ENCODE measurements at regions of chr15 and their contacts with region 1.

Region 1: DNA sequence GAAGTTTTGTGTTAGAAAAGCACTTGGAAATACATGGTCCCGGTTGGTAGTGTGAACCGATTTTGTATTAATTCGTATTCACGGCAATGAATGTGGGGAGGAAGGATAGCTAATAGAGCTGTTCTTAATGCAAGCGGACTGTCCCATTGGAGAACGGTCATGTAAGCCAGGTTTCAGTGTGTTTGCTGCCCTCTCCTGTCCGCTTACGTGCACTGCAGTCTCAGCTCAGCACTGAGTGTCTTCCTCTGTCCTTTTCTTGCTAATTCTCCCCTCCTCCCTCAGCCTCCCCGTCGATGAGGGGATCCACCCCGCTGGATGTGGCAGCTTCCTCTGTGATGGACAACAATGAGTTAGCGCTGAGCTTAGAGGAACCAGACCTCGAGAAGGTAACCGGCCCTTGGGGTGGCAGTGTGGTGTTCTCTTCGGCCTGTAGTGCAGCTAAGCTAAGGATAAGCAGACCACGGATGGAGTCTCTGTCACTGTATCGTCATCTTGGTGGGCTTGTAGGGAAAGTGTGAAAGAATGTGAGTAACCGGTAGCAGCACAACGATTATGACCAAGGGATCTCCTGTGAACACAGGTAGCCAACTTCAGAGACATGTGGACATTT is 267.5 kb upstream of the CHRM5 start:
- DNase-seq: peak; percentile 65 to 89
- H3K4me3 ChIP-seq: no peak overlapping the region
- H3K27ac ChIP-seq: no peak overlapping the region
- H3K4me1 ChIP-seq: peaks cover 0 to 4% (median 0%) of the 10 kb centered on the region in 4 experiments; a peak in 4 of 7 replicates
- H3K27me3 ChIP-seq: no peaks in the 10 kb centered on the region
- CTCF ChIP-seq: peak; percentile 86 to 100 (median 98)
- EP300 ChIP-seq: no peak
- POLR2A ChIP-seq: no peak
- RAD21 ChIP-seq: peak; percentile 94 to 98

Region 2: DNA sequence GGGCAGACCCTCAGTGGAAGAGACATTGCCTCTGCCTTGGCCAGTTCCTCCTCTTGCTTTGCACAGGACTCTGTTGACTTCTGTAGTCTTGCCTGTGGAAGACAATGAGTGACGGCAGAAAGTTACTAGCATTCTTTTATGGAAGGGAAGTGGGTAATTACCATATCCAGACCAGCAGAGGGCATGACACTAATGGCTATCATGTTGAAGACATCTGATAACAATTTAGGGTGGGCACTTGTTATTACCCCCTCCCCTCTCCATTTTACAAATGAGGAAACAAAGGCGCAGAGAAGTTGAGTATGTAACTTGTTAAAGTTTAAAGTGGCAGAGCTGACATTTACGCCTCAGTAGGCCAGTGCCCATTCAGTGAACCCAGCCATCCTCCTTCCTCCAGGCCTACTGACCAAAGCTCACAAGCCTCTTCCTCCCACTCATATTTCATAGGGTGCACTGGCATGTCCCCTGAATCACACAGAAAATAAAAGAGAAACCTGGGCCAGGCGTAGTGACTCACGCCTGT is 458.1 kb before region 1 on chr15:
- CTCF ChIA-PET with region 1: interaction called, 22 read pairs
- POLR2A ChIA-PET with region 1: no interaction called
- DNase-seq: no peak
- H3K4me3 ChIP-seq: no peak overlapping the region
- H3K27ac ChIP-seq: peak overlapping the region; percentile 31; the same call in 1 of the 2 replicates
- H3K4me1 ChIP-seq: peaks cover 0 to 8% (median 2%) of the 10 kb centered on the region in 4 experiments; a peak in 2 of 7 replicates
- H3K27me3 ChIP-seq: no peaks in the 10 kb centered on the region
- CTCF ChIP-seq: peak in 2 of 3 experiments; percentile 40 to 62; a peak in 2 of 4 replicates
- EP300 ChIP-seq: no peak
- POLR2A ChIP-seq: no peak
- RAD21 ChIP-seq: peak; percentile 49 to 56

Region 3: DNA sequence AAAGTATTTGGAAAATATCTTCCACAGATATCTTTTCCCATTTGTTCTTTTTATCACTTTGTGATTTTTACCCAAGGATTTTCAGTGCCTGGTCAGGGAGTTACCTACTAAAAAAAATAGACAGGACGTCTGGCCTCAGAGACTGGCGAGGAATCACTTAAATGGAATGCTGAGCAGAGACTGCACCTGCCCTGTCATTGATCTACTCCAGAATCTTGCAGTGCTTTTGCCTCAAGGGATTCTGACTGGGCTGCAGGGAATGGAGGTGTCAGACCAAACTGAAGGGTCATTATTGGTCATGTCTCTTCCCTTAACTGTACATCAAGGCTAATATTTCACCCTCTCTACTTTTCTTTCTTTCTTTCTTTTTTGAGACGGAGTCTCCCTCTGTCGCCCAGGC is 402.2 kb before region 1 on chr15:
- CTCF ChIA-PET with region 1: interaction called, 81 read pairs
- POLR2A ChIA-PET with region 1: no interaction called
- DNase-seq: no peak
- H3K4me3 ChIP-seq: no peak overlapping the region
- H3K27ac ChIP-seq: no peak overlapping the region
- H3K4me1 ChIP-seq: no peaks in the 10 kb centered on the region
- H3K27me3 ChIP-seq: no peaks in the 10 kb centered on the region
- CTCF ChIP-seq: no peak
- EP300 ChIP-seq: no peak
- POLR2A ChIP-seq: no peak
- RAD21 ChIP-seq: no peak

Region 4: GRCh38 chr15:33398555-33398954 is 302.2 kb before region 1 on chr15:
- CTCF ChIA-PET with region 1: interaction called, 14 read pairs
- POLR2A ChIA-PET with region 1: no interaction called
- DNase-seq: no peak
- H3K4me3 ChIP-seq: no peak overlapping the region
- H3K27ac ChIP-seq: no peak overlapping the region
- H3K4me1 ChIP-seq: peaks cover 0 to 2% (median under 1%) of the 10 kb centered on the region in 4 experiments; a peak in 3 of 7 replicates
- H3K27me3 ChIP-seq: no peaks in the 10 kb centered on the region
- CTCF ChIP-seq: no peak
- EP300 ChIP-seq: no peak
- POLR2A ChIP-seq: no peak
- RAD21 ChIP-seq: no peak

Region 5: DNA sequence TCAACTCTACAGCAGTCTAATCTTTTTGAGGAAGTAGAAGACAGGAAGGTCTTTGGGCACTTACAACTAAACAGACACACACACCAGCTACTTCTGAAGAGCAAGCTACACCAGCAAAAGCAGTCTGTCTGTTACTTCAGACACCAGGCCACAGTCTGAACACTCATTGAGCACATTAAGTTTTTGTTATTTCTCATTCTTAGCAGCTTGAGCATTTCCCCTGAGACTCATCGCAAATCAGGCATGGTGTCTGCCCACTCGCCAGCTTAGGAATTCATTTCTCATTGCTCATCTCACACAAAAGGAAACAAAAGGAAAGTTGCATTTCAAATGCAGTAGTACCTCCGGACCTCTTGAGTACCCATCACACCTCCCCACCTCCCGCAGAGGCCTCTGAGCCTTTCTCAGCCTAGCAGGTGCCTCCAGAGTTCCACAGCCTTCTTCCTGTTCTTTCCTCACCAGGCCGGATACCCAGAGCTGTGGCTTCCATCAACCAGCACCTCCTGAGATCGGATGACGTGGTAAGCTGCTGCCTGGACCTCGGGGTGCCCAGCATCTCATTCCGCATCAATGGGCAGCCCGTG is 88.0 kb before region 1 on chr15:
- CTCF ChIA-PET with region 1: no interaction called
- POLR2A ChIA-PET with region 1: no interaction called
- DNase-seq: no peak
- H3K4me3 ChIP-seq: no peak overlapping the region
- H3K27ac ChIP-seq: no peak overlapping the region
- H3K4me1 ChIP-seq: peaks cover 3 to 6% (median 5%) of the 10 kb centered on the region in 4 experiments; a peak in 5 of 7 replicates
- H3K27me3 ChIP-seq: no peaks in the 10 kb centered on the region; a peak in 1 of 7 replicates
- CTCF ChIP-seq: no peak
- EP300 ChIP-seq: no peak
- POLR2A ChIP-seq: no peak
- RAD21 ChIP-seq: no peak

Region 6: DNA sequence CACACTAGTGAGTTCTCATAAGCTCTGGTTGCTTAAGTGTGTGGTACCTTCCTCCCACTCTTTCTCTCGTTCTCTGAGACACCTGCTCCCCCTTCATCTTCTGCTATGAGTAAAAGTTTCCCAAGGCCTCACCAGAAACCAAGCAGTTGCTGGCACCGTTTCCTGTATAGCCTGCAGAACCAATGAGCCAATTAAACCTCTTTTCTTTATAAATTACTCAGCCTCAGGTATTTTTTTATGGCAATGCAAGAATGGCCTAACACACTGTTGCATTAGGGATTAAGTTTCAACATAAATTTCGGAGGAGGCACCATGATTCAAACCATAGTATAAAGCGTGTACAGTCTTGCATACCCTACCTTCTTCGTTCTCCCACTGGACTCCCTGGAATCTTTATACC is 15.2 kb after region 1 on chr15:
- CTCF ChIA-PET with region 1: interaction called, 26 read pairs
- POLR2A ChIA-PET with region 1: no interaction called
- DNase-seq: no peak
- H3K4me3 ChIP-seq: no peak overlapping the region
- H3K27ac ChIP-seq: no peak overlapping the region
- H3K4me1 ChIP-seq: no peaks in the 10 kb centered on the region
- H3K27me3 ChIP-seq: no peaks in the 10 kb centered on the region
- CTCF ChIP-seq: no peak
- EP300 ChIP-seq: no peak
- POLR2A ChIP-seq: no peak
- RAD21 ChIP-seq: no peak

Region 7: DNA sequence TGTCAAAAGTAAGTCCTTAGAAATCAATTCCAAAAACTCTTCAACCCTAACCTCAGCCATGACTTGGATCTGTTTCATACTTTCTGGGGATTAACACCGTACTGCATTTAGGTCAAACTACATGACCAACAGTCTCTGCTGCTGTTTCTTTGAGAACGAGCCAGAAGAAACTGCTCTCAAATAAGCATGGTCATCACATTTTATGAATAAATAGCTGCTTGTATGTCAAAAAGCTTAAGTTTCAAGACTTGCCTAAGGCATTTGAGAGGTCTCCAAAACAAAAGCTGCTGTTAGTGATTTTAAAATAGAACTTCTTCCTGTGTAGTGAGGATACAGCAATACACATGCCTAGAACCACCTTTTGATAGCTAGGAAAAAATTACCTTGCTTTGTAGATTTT is 101.2 kb after region 1 on chr15:
- CTCF ChIA-PET with region 1: no interaction called
- POLR2A ChIA-PET with region 1: no interaction called
- DNase-seq: no peak
- H3K4me3 ChIP-seq: no peak overlapping the region
- H3K27ac ChIP-seq: no peak overlapping the region
- H3K4me1 ChIP-seq: no peaks in the 10 kb centered on the region
- H3K27me3 ChIP-seq: no peaks in the 10 kb centered on the region
- CTCF ChIP-seq: no peak
- EP300 ChIP-seq: no peak
- POLR2A ChIP-seq: no peak
- RAD21 ChIP-seq: no peak

Region 8: DNA sequence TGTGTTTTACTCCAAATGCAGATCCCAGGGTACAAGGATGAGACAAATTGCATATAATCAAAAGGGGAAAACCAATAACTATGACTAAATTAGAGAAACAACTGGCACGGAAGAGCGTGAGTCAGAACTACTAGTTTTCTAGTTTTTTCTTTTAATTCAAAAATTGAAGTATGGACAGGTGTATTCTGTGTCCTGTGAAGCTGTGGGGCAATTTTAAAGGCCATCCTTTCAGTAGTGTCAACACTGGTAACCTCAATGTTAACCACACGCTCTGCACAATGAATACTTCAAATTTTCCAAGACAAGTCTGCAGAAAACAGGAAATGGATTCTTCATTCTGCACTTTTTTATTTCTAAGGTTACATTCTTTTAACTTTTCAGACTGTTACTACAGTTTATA is 769.3 kb after region 1 on chr15:
- CTCF ChIA-PET with region 1: no interaction called
- POLR2A ChIA-PET with region 1: no interaction called
- DNase-seq: no peak
- H3K4me3 ChIP-seq: no peak overlapping the region
- H3K27ac ChIP-seq: no peak overlapping the region
- H3K4me1 ChIP-seq: no peaks in the 10 kb centered on the region
- H3K27me3 ChIP-seq: no peaks in the 10 kb centered on the region
- CTCF ChIP-seq: no peak
- EP300 ChIP-seq: no peak
- POLR2A ChIP-seq: no peak
- RAD21 ChIP-seq: no peak

Measured in H1 (cell line).